Head of caudate nucleus (tissue), 42 donors: ENCODE measurements at regions of chr1 and their contacts with region 1.

Region 1: GRCh38 chr1:219660666-219661463 is 48.0 kb upstream of the ZC3H11B start:
- DNase-seq: peak; percentile 84 to 98 (median 94)

Region 2: DNA sequence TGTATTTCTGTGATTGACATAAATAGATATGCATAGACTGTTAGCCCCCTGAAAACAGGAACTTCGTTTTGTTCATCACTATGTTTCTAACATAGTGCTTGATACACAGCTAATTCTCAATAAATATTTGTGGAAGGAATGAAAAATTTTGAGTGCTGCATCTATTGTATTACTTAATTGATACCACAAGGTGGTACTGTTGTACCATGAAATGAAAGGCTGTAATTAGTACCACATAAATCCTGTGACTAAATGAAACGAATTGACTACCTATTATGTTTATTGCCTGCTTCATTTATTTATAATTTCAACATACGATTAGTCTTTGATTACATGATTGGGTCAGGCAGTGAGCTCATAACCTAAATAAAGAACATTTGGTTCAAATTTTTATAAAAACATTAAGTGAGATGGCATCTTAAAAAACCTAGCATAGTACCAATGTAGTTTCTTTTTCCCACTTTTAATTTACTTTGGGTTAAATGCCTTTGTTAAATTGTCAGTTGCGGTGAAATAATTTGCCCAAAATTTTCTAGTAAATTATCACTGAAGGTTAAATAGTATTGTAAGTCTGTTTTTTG is 1330.7 kb before region 1 on chr1:
- intact Hi-C with region 1: loop called (anchors 10 kb)
- DNase-seq: no peak

Region 3: GRCh38 chr1:219587805-219588561 is 72.9 kb before region 1 on chr1:
- intact Hi-C with region 1: no loop called
- DNase-seq: no peak

Region 4: GRCh38 chr1:219773775-219774174 is 112.9 kb after region 1 on chr1:
- intact Hi-C with region 1: no loop called
- DNase-seq: no peak

Region 5: GRCh38 chr1:219812491-219813203 is 151.8 kb after region 1 on chr1:
- intact Hi-C with region 1: loop called (anchors 10 kb)
- DNase-seq: peak in 40 of 42 donors; percentile 11 to 86 (median 62)